ENCODE measurements at regions of chr3 and their contacts with region 1.

Region 1: GRCh38 chr3:169133178-169134161 is 530.0 kb downstream of the MECOM start:
- DNase-seq: peak; percentile 83
- H3K4me3 ChIP-seq: no peak overlapping the region
- H3K27ac ChIP-seq: peak overlapping the region; percentile 52
- H3K4me1 ChIP-seq: peaks cover 44% of the 10 kb centered on the region
- H3K27me3 ChIP-seq: no peaks in the 10 kb centered on the region
- CTCF ChIP-seq: peak in 1 of 2 donors; percentile 16
- POLR2A ChIP-seq: peak; percentile 17

Region 2: DNA sequence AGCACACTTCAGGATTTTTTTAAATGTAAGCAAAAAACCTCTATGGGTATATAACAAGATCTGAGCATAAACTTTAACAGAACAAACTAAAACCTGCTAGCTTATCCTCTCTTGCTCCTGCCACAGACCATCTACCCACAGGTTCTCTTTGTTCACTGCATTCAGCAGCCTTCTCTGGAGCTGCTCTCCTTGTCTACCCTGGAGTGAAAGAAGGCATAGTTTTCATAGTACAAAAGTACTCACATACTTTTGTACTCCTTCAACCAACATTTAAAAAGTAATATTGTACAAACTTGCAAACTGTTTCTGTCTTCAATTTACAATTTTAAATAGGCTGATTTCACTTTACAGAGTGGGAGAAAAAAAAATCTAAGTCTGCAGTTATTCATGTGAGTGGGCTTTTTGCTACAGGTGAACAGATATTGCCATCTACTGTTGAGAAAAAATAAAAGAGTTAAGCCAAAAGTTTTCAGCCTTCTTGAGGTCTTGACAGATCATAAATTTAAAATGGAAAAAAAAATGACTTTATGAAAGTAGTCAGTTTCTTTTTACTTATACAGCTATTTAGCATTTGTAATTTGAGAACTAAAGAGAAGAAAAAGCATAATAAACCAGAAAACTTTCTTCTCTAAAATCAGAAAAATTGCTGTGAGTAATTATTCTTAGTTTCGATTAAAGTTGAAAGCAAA is 611.0 kb after region 1 on chr3:
- CTCF ChIA-PET with region 1: no interaction called
- POLR2A ChIA-PET with region 1: no interaction called
- dilution Hi-C with region 1: no loop called
- intact Hi-C with region 1: loop called (anchors 5 kb)
- DNase-seq: peak; percentile 74
- H3K4me3 ChIP-seq: no peak overlapping the region
- H3K27ac ChIP-seq: no peak overlapping the region
- H3K4me1 ChIP-seq: no peaks in the 10 kb centered on the region
- H3K27me3 ChIP-seq: peaks cover 2 to 13% of the 10 kb centered on the region in 2 experiments
- CTCF ChIP-seq: peak in 1 of 2 donors; percentile 21
- POLR2A ChIP-seq: no peak

Measured in endothelial cell of umbilical vein (primary cell).